ENCODE measurements at regions of chr7 and their contacts with region 1.

Region 1: DNA sequence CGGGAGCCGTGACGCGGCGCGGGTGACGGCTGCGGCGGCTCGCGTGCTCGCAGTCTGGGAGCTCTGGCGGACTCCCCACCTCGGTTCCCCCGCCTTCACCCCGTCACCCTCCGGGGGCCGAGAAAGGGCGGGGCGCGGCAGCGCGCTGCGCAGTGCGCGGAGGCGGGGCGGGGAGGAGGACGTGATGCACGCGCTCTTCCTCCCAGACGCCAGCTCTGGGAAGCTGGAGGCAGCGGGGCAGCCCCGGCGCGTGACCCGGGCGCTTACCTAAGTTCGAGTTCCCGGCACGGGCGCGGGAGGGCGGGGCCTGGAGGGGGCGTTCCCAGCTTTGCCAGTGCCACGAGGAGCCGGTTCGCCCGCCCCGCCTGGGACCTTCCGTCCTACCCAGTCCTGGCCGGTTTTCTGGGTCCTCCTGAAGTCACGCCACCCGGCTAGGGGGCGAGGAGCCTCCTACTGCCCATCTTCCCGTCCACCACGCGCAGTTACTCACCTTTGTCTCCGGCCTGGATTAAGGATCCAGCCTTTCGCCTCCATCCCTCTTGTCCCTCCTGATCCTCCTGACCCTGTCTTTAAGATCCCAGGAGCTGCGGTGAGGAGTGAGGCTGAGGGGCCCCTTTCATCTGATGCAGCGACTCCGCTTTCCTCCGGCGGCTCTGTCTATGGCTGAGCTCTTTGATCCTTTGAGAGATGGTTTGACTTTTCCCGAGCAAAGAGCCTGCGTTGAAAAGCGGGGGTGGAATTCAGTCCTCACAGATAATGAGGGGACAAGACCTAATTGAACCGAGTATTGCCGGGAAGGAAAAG is 470 bp upstream of the NAMPT start:
- DNase-seq: peak; percentile 100
- ATAC-seq: peak; percentile 96

Region 2: GRCh38 chr7:105958012-105958411 is 327.2 kb before region 1 on chr7:
- intact Hi-C with region 1: no loop called
- DNase-seq: no peak
- ATAC-seq: no peak

Region 3: GRCh38 chr7:106187613-106188350 is 97.5 kb before region 1 on chr7:
- intact Hi-C with region 1: loop called in 1 of 2 experiments (anchors 10 kb)
- DNase-seq: no peak
- ATAC-seq: no peak

Region 4: DNA sequence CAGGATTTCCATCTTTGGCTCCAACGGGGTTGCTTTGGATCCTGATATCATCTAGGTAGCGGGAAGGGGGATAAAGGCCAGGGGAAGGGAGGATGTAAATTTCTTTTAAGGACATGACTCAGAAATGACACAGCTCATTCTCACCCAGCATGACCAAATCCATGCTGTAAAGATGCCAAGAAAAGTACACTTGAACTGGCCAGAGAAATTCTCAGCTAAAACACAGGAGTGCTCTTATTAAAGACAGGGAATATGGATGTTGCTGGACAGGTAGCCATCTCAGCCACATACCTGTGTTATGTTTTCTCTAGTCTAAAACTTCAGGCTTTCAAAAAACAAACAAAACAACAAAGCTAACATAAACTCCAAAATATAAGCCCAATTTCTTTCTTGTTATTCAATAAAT is 68.7 kb before region 1 on chr7:
- intact Hi-C with region 1: loop called in 1 of 2 experiments (anchors 2 kb)
- DNase-seq: peak; percentile 70
- ATAC-seq: peak; percentile 84 to 93

Region 5: DNA sequence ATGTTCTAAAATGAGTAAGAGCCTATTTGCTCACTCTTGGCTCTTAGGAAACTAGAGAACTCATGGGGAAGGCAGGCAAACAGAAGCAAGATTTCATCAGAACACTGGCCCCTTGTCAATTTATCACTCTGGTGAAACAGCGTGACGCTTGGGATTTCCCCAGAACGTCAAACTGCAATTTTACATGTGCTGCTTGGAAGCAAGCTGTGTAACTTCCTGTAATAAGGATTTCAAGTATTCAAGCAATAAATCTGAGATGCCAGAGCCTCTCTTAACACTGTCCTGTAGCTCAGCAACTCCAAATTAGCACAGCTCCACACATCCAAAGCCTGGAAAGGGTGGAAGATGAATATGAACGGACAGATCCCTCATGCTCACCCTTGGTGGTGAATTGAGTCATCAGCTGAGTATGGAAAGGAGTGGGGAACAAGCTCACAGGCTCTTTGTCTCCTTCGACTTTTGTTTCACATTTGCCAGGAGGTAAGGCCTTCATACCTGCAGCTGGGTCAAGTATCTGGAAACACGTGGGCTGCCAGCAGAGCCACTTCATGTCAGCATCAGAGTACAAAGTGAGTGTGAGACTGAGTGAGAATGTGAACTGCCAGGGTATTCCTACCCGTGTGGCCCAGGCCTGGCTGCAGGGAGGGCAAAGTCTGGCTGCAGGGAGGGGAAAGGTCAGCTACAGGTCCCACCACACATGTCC is 139.9 kb after region 1 on chr7:
- intact Hi-C with region 1: loop called in 1 of 2 experiments (anchors 1 kb)
- DNase-seq: peak; percentile 66
- ATAC-seq: peak; percentile 65 to 78

Region 6: GRCh38 chr7:106461993-106462859 is 177.0 kb after region 1 on chr7:
- intact Hi-C with region 1: loop called in 1 of 2 experiments (anchors 5 kb)
- DNase-seq: no peak
- ATAC-seq: peak; percentile 35 to 57

Region 7: DNA sequence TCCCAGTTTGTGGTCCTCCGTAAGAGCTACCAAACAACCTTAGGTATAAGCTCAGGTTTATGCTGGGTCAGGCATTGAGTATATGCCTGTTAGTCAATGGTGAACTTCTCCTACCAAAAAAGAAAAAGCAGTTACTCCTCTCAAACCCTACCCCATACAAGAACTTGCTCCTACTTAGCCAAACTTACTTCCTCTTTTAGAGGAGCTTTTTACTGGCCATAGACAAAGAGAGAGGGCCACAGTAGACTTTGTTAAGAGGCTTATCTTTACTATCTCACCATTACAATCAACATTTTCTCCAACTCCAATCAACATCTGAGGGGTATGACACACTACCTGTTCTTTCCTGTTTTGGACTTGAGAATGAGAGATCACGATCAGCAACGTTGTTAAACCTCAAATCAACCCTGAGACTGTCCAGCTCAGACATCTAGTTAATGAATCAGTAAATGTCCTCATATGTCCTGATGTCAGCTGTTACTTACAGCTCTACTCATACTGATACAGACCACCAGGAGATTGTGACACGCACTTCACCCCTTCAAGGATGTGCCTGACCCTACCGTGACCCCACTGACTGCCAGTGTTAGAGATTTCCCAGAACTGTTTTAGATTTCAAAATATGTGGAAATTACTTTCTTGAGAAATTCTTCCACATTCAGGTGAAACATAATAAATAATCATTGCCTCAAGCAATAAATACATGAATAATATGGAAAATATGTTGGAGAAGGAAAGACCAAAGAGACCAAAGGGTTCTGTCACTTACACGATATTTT is 394.1 kb after region 1 on chr7:
- intact Hi-C with region 1: no loop called
- DNase-seq: no peak
- ATAC-seq: peak; percentile 30 to 41

Measured in left cardiac atrium (tissue), 4 donors.